ENCODE measurements at regions of chr9 and their contacts with region 1.

Region 1: DNA sequence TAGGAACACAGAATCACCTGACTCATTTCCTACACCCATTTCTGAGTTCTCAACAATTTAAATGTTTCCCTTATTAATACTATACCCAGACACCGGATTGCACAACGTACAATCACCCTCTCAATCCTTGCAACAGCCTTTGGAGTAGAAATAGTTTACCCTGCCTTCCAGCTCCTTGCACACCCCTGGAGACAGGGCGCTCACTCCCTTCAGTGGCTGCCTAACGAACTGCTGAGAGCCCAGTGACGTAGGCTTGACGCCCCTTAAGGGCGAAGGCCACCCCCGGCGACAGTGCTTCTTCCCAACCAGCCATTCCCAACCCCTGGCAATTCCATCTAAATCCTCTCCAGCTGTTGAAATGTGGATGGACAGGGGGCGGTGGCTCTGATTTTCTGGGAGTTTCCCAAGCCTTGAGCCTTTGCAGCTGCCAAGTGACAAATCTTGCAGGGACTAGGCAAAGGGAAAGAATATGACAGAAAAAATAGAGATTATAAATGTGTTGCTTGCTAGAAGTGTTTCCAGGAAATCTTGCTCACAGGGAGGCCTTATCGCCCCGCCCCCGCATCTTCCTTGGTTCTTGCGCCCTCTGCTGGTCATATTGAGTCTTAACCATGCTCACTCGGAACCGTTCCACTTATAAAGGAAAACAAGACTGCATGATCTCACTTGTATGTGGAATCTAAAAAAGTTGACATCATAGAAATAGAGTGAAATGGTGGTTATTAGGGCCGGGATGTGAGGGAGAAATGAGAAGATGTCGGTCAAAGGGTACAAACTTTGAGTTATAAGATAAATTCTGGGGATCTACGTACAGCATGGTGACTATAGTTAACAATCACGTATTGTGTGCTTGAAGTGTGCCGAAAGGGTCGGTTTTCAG is 7.6 kb upstream of the BARX1 start:
- DNase-seq: peak; percentile 67 to 88 (median 80)
- ATAC-seq: peak; percentile 90 to 95 (median 93)
- H3K4me3 ChIP-seq: no peak overlapping the region
- H3K27ac ChIP-seq: no peak overlapping the region
- H3K4me1 ChIP-seq: peaks cover 0 to 16% (median 4%) of the 10 kb centered on the region in 3 donors
- H3K27me3 ChIP-seq: peaks cover 0 to 29% (median 12%) of the 10 kb centered on the region in 4 donors
- CTCF ChIP-seq: peak; percentile 63 to 88 (median 80)

Region 2: GRCh38 chr9:93650448-93650847 is 312.4 kb before region 1 on chr9:
- intact Hi-C with region 1: no loop called
- DNase-seq: peak in 3 of 6 donors; percentile 11 to 42 (median 33)
- ATAC-seq: no peak
- H3K4me3 ChIP-seq: no peak overlapping the region
- H3K27ac ChIP-seq: no peak overlapping the region
- H3K4me1 ChIP-seq: no peaks in the 10 kb centered on the region
- H3K27me3 ChIP-seq: no peaks in the 10 kb centered on the region
- CTCF ChIP-seq: no peak

Region 3: DNA sequence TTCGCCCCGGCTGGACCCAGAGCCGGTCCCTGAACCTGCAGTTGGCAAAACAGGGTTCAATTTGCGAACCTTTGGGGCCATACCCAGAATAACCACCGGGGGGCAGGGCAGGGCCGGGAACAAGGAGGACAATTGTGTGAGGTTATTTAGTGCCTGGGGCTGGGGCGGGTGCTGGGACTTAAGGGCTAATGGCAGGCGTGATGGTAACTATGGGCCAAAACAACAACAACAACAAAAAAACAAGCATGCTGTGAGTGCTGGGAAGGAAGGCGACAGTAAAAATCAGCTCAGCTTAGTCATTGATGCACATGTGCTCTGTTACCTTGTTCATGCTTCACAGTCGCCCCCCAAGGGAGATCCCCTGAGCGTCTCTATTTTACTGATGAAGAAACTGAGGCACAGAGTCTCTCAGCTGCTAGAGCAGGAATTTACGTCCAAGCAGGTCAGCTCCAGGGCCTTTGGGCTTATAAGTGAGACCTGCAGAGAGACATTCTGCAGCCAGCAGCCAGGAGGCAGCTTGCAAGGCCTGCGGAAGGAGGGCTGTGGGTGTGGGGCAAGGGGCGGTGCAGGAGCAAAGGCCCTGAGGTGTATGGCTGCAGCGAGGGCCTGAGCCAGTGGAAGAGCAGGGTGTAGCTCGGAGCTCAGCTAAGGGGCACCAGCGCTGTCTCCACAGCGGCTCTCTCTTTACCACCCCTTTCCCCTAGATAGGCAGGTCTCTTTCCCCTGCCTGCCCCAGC is 280.4 kb before region 1 on chr9:
- intact Hi-C with region 1: loop called (anchors 2 to 10 kb)
- DNase-seq: peak in 5 of 6 donors; percentile 32 to 89 (median 77)
- ATAC-seq: peak; percentile 80 to 92 (median 86)
- H3K4me3 ChIP-seq: no peak overlapping the region
- H3K27ac ChIP-seq: no peak overlapping the region
- H3K4me1 ChIP-seq: no peaks in the 10 kb centered on the region
- H3K27me3 ChIP-seq: no peaks in the 10 kb centered on the region
- CTCF ChIP-seq: peak; percentile 64 to 79 (median 69)

Region 4: DNA sequence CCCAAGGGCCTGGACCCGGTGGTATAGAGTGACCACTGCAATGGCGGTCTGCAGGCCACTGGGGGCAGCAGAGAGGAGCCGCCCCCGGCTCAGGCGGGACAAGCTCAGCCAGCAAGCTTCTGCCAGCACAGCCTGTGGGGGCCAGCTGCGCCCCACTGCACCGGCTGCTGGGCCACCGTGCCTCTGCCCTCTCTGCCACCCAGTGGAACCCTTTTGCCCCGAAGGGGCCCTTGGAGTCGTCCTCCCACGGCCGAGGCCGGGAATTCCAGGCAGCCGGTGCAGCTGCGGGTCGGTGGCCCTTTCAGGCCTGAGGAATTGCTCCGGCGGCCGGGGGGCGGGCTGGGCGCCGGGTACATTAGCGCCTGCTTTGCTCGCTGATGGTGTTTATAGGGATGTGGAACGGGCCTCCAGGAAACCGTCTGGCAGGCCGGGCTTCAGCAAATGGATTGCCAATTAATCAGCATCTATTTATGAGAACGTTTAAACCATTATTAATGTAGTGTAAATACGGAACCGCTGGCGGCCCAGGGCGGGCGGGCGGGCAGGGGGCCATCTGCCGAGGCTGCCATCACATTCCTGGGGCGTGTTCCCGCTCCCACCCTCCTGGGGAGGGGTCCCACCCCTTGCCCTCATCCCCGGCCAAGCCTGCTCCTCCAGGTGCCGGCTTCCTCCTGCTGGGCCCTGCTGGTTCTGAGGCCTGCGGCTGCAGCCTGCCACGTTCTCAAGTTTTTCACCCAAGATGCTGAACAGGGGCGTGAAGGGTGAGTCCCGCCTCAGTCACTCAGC is 135.1 kb before region 1 on chr9:
- intact Hi-C with region 1: loop called in 1 of 3 experiments (anchors 10 kb)
- DNase-seq: peak; percentile 39 to 88 (median 72)
- ATAC-seq: peak; percentile 96 to 99 (median 98)
- H3K4me3 ChIP-seq: peak overlapping the region in 2 of 4 donors; percentile 38 to 49
- H3K27ac ChIP-seq: no peak overlapping the region
- H3K4me1 ChIP-seq: no peaks in the 10 kb centered on the region
- H3K27me3 ChIP-seq: no peaks in the 10 kb centered on the region
- CTCF ChIP-seq: peak; percentile 91 to 96 (median 94)